Left lung (tissue), 14 donors: ENCODE measurements at regions of chr9 and their contacts with region 1.

Region 1: DNA sequence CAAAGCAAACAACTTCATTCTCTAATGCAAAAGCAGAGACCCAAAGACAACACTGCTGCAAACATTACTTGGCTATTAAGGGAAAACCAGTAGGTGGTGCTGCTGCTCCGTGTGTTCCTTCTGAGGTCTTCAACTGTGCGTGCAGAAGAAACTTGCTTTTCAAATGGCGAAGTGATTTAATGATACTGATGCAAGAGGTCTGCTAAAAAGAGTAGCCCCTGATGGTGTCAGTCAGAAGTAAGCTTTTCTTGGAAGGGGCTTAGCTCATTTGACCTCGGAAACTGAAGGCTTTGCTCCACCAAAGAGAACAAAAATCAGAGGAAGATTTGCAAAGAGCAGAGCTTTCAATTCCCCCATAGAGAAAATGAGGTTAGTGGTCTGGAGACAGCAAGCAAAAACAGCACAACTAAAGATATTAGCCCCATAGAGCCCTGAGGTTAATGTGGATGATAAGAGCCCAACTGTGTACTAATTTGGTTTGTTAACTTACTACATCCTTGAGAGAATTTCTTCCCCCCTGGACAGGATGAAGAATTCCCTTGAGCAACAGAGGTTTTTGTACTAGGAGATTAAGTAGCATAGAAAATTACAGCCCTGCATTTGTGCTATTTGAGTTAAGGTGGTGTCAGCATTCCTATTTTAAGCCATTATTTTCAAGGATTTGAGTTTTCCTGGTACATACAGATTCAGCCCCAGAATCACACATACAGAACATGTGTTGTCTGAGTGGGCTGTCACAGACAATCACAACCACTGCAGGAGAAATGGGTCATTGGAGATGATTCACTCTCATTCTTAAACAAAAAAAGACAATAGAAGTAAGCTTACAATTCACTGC is 153.2 kb upstream of the C9orf72 start:
- DNase-seq: peak in 3 of 4 donors; percentile 47 to 87 (median 79)
- ATAC-seq: peak; percentile 94
- H3K4me3 ChIP-seq: no peak overlapping the region
- H3K27ac ChIP-seq: no peak overlapping the region
- H3K4me1 ChIP-seq: no peaks in the 10 kb centered on the region
- H3K27me3 ChIP-seq: no peaks in the 10 kb centered on the region
- CTCF ChIP-seq: peak; percentile 64 to 70

Region 2: GRCh38 chr9:27755846-27756245 is 29.4 kb after region 1 on chr9:
- intact Hi-C with region 1: loop called in 1 of 2 experiments (anchors 2 kb)
- DNase-seq: peak in 1 of 4 donors; percentile 28
- ATAC-seq: no peak
- H3K4me3 ChIP-seq: no peak overlapping the region
- H3K27ac ChIP-seq: no peak overlapping the region
- H3K4me1 ChIP-seq: no peaks in the 10 kb centered on the region
- H3K27me3 ChIP-seq: no peaks in the 10 kb centered on the region
- CTCF ChIP-seq: no peak

Region 3: DNA sequence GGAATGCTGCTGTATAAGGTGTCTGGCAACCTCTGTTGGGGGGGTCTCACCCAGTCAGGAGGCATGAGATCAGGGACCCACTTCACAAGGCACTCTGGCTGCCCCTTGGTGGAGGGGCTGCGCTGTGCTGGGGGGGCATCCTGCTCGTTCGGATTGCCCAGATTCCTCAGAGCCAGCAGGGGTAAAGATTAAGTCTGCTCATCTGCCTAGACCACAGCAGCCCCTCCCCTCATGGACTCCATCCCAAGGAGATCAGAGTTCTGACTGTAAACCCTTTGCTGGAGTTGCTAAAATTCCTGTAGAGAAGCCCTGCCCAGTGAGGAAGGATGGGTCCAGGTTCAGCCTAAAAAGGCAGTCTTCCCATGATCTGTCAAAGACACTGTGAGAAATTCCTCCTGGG is 108.8 kb after region 1 on chr9:
- intact Hi-C with region 1: no loop called
- DNase-seq: no peak
- ATAC-seq: no peak
- H3K4me3 ChIP-seq: no peak overlapping the region
- H3K27ac ChIP-seq: no peak overlapping the region
- H3K4me1 ChIP-seq: no peaks in the 10 kb centered on the region
- H3K27me3 ChIP-seq: no peaks in the 10 kb centered on the region
- CTCF ChIP-seq: no peak

Region 4: DNA sequence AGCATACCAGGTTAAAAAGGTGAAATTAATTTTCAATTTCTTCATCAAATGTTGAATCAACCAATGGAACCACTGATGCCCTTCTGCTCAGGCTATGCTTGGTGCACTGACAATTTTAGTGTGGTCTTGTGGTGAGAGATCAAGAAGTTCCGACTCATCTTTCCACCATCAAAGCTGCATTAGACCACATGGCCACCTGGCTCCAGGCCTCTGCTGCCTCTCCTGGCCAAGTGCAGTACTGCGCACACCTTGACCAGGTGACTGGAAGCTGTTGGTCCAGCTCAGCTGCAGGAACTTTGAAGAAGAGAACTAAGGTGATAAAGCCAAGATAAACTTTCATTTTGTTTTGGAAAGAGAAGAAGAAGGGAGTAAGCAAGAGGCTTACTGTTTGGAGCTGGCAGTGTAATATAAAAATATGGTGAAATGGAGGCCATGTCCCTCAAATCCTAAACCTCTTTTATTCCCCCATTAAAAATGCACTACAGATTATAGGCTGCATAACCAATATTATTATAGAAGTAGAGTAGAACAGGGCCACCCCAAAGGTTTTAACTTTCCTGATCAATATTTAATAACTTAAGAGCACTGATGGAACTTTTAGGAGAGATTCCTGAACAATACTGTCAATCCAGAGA is 162.3 kb after region 1 on chr9:
- intact Hi-C with region 1: no loop called
- DNase-seq: peak in 1 of 4 donors; percentile 70
- ATAC-seq: peak; percentile 62
- H3K4me3 ChIP-seq: no peak overlapping the region
- H3K27ac ChIP-seq: no peak overlapping the region
- H3K4me1 ChIP-seq: no peaks in the 10 kb centered on the region
- H3K27me3 ChIP-seq: no peaks in the 10 kb centered on the region
- CTCF ChIP-seq: peak; percentile 39 to 53

Region 5: GRCh38 chr9:28073270-28073669 is 346.8 kb after region 1 on chr9:
- intact Hi-C with region 1: loop called in 1 of 2 experiments (anchors 5 kb)
- DNase-seq: peak in 2 of 4 donors; percentile 60 to 72
- ATAC-seq: peak; percentile 83
- H3K4me3 ChIP-seq: no peak overlapping the region
- H3K27ac ChIP-seq: no peak overlapping the region
- H3K4me1 ChIP-seq: no peaks in the 10 kb centered on the region
- H3K27me3 ChIP-seq: no peaks in the 10 kb centered on the region
- CTCF ChIP-seq: peak; percentile 43 to 54